Activated CD4-positive, alpha-beta T cell treated with anti-CD3 and anti-CD28 coated beads for 36 hours (primary cell): ENCODE measurements at regions of chr2 and their contacts with region 1.

Region 1: DNA sequence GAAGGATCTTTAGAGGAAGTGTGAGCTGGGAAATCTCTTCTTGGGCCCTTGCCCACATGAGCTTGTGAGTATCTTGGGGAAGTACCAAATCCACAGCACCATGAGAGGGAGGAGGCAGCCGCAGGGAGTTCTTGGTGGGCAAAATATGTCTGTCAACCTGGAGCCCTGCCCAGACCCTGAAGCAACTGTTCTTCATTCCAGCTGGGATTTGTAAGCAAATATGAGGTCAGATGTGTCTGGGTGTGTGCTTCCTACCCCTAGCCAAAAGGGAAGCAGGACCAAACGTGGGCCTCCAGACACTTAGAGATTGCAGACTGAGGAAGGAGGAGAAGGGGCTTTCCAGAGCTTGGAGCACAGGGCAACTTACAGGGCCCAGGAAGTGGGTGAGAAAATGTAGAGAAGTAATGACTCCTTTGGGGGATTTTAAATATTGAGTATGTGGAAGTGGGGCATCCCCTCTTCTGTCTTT is 41.9 kb downstream of the TMEM247 start:
- DNase-seq: no peak
- ATAC-seq: peak; percentile 69
- H3K4me3 Mint-ChIP-seq: no peak overlapping the region
- H3K27ac Mint-ChIP-seq: no peak overlapping the region
- H3K4me1 Mint-ChIP-seq: peaks cover 8% of the 10 kb centered on the region
- H3K27me3 Mint-ChIP-seq: no peaks in the 10 kb centered on the region

Region 2: DNA sequence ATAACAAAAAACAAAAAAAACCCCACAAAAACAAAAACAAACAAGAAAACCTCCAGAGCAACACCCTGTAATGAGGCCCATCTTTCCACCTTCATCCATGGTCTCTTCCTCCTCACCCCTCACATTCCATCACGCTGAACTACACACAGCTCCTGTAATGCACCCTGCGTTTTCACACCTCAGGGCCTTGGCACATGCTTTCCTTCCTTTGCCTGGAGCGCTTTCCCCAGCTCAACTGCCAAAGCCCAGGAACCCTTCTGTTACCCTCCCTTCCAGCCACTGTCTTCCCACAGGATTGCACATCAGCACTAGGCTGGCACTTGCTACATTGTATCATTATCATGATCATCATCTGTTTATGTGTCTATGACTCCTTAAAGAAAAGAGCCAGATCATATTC is 12.5 kb before region 1 on chr2:
- CTCF ChIA-PET with region 1: no interaction called
- POLR2A ChIA-PET with region 1: no interaction called
- intact Hi-C with region 1: loop called in 1 of 2 experiments (anchors 1 kb)
- DNase-seq: no peak
- ATAC-seq: no peak
- H3K4me3 Mint-ChIP-seq: no peak overlapping the region
- H3K27ac Mint-ChIP-seq: no peak overlapping the region
- H3K4me1 Mint-ChIP-seq: peaks cover 6% of the 10 kb centered on the region
- H3K27me3 Mint-ChIP-seq: no peaks in the 10 kb centered on the region

Region 3: DNA sequence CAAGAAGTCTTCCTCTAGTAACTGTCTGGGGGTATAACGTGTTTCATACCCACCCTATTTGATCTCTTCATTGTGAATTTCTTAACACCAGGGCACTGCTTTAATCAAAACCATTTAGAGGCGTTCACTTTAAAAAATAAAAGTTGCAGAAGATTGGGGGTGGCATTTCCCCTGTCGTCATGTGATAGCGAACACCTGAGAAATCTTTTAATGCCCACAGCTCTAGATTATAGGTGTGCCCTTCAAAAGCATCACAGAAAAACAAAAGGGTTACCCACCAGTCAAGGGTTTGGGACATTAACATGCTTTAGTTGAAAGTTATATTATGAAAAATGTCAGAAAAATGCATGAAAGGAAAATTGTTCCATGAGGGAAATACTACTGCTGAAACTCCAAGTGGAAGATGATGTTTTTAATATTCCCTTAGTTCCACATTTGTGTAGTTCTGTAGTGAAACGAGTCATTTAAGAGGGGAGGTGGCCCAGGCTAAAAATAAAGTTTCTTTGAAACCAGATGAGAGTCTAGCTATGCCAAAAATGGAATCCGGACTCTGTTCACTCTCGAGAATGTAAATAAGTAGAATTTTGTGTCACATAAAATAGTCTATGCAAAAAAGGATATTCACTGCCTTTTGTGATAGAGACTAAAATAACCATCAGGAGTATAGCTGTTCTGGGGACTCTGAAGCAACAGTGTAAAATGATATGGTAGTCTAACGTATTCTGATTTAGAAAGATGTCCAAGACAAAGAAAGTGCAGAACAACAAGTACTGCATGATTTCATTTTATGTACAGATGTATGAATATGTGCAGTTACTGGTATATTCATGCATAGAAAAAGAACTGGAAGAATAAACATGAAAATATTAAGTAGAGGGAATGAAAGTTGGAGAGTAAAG is 53.5 kb after region 1 on chr2:
- CTCF ChIA-PET with region 1: no interaction called
- POLR2A ChIA-PET with region 1: no interaction called
- intact Hi-C with region 1: no loop called
- DNase-seq: no peak
- ATAC-seq: no peak
- H3K4me3 Mint-ChIP-seq: no peak overlapping the region
- H3K27ac Mint-ChIP-seq: no peak overlapping the region
- H3K4me1 Mint-ChIP-seq: no peaks in the 10 kb centered on the region
- H3K27me3 Mint-ChIP-seq: no peaks in the 10 kb centered on the region

Region 4: GRCh38 chr2:46645681-46646162 is 124.5 kb after region 1 on chr2:
- CTCF ChIA-PET with region 1: no interaction called
- POLR2A ChIA-PET with region 1: no interaction called
- intact Hi-C with region 1: no loop called
- DNase-seq: no peak
- ATAC-seq: no peak
- H3K4me3 Mint-ChIP-seq: no peak overlapping the region
- H3K27ac Mint-ChIP-seq: no peak overlapping the region
- H3K4me1 Mint-ChIP-seq: peaks cover 7% of the 10 kb centered on the region
- H3K27me3 Mint-ChIP-seq: no peaks in the 10 kb centered on the region

Region 5: DNA sequence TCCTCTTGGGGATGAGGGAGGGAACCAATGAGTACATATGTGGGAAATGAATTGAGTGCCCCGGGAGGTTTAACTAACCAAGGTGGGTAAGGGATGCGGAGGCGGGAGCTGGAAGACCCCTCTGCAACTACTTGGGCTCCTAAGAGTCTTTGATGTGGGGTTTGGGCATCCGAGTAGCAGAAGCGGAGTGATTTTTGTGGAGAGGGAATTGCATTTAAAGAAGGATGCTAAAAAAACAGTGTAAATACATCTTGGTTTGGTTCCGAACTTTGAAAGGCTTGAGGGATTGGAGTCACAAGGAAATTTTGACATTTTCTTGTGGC is 178.6 kb after region 1 on chr2:
- CTCF ChIA-PET with region 1: no interaction called
- POLR2A ChIA-PET with region 1: no interaction called
- intact Hi-C with region 1: no loop called
- DNase-seq: no peak
- ATAC-seq: no peak
- H3K4me3 Mint-ChIP-seq: peak overlapping the region; percentile 97
- H3K27ac Mint-ChIP-seq: peak overlapping the region; percentile 93
- H3K4me1 Mint-ChIP-seq: peaks cover 45% of the 10 kb centered on the region
- H3K27me3 Mint-ChIP-seq: no peaks in the 10 kb centered on the region